A549 (cell line): ENCODE measurements at regions of chr20 and their contacts with region 1.

Region 1: DNA sequence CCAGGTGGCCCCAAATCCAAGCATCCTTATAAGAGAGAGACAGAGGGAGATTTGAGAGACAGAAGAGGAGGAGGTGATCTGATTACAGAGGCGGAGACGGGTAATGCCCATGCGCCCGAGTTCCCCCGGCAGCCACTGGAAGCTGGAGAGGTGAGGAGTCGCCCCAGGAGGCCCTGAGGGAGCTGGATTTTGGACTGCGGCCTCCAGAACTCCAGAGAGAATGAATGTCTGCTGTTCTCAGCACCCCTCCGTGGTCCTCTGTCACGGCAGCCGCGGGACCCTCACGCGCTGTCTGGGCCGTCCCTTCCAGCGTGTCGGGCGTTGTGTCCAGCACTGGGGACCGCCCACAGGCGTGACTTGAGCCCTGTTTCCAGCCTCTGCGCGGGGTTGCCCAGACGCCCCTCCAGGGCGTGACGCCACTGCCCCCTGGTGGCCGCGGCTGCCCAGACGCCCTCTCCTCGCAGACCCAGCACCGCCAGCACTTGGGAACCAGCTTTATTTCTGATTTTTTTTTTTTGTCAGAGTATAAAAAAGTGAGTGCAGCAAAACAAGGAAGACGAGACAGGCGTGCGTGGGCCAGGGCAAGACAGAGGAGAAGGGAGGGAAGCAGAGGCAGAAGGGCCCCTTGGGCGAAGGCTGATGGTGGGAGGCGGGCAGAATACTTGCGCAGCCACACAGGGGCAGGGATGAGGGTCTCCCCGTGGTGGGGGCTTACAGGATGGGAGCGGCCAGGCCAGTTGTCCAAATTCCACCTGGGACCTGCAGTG is 4.1 kb upstream of the ZNF512B start:
- DNase-seq: peak; percentile 86 to 87
- ATAC-seq: peak; percentile 67 to 92
- H3K4me3 ChIP-seq: peak overlapping the region; percentile 46
- H3K27ac ChIP-seq: peak overlapping the region; percentile 80 to 83
- H3K4me1 ChIP-seq: peaks cover 42% of the 10 kb centered on the region
- CTCF ChIP-seq: peak; percentile 97
- EP300 ChIP-seq: no peak
- POLR2A ChIP-seq: peak; percentile 56
- RAD21 ChIP-seq: peak; percentile 93 to 94

Region 2: GRCh38 chr20:63529861-63530788 is 443.7 kb before region 1 on chr20:
- CTCF ChIA-PET with region 1: interaction called, 12 read pairs
- POLR2A ChIA-PET with region 1: no interaction called
- DNase-seq: no peak
- ATAC-seq: peak; percentile 10; a peak in 4 of 6 replicates
- H3K4me3 ChIP-seq: no peak overlapping the region
- H3K27ac ChIP-seq: no peak overlapping the region
- H3K4me1 ChIP-seq: no peaks in the 10 kb centered on the region
- CTCF ChIP-seq: no peak
- EP300 ChIP-seq: no peak
- POLR2A ChIP-seq: no peak
- RAD21 ChIP-seq: no peak

Region 3: GRCh38 chr20:63889241-63890200 is 84.3 kb before region 1 on chr20:
- CTCF ChIA-PET with region 1: interaction called, 15 read pairs
- POLR2A ChIA-PET with region 1: no interaction called
- DNase-seq: no peak
- ATAC-seq: no peak
- H3K4me3 ChIP-seq: no peak overlapping the region
- H3K27ac ChIP-seq: no peak overlapping the region
- H3K4me1 ChIP-seq: no peaks in the 10 kb centered on the region
- CTCF ChIP-seq: no peak
- EP300 ChIP-seq: no peak
- POLR2A ChIP-seq: no peak
- RAD21 ChIP-seq: no peak

Region 4: DNA sequence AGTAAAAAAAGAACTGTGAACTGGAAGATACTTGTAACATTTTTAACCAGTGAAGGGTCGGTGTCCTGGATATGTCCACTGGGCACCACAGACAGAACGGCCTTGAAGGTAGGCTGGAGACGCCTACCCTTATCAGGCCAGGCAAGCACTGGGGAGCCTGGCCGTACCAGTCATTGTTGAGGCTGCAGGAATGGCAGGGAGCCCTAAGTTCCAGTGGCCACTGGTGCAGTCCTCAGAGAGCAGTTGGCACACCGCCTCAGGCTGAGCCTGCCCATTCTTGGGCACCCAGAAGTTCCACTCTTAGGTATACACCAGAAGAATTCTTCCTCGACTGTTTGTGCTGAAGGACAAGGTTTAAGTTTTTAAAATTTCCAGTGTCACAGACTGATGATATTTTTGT is 58.3 kb before region 1 on chr20:
- CTCF ChIA-PET with region 1: interaction called, 10 read pairs
- POLR2A ChIA-PET with region 1: no interaction called
- DNase-seq: no peak
- ATAC-seq: no peak
- H3K4me3 ChIP-seq: no peak overlapping the region
- H3K27ac ChIP-seq: no peak overlapping the region
- H3K4me1 ChIP-seq: no peaks in the 10 kb centered on the region
- CTCF ChIP-seq: no peak
- EP300 ChIP-seq: no peak
- POLR2A ChIP-seq: no peak
- RAD21 ChIP-seq: no peak

Region 5: GRCh38 chr20:63963348-63964301 is 10.2 kb before region 1 on chr20:
- CTCF ChIA-PET with region 1: interaction called, 44 read pairs
- POLR2A ChIA-PET with region 1: no interaction called
- DNase-seq: no peak
- ATAC-seq: no peak
- H3K4me3 ChIP-seq: no peak overlapping the region
- H3K27ac ChIP-seq: no peak overlapping the region
- H3K4me1 ChIP-seq: peaks cover 4% of the 10 kb centered on the region; the same call in 2 of the 3 replicates
- CTCF ChIP-seq: no peak
- EP300 ChIP-seq: no peak
- POLR2A ChIP-seq: no peak
- RAD21 ChIP-seq: no peak

Region 6: GRCh38 chr20:64015635-64016034 is 41.8 kb after region 1 on chr20:
- CTCF ChIA-PET with region 1: no interaction called
- POLR2A ChIA-PET with region 1: no interaction called
- DNase-seq: no peak
- ATAC-seq: no peak
- H3K4me3 ChIP-seq: no peak overlapping the region
- H3K27ac ChIP-seq: no peak overlapping the region
- H3K4me1 ChIP-seq: no peaks in the 10 kb centered on the region
- CTCF ChIP-seq: no peak
- EP300 ChIP-seq: no peak
- POLR2A ChIP-seq: no peak
- RAD21 ChIP-seq: no peak

Region 7: GRCh38 chr20:64161356-64162238 is 187.8 kb after region 1 on chr20:
- CTCF ChIA-PET with region 1: no interaction called
- POLR2A ChIA-PET with region 1: no interaction called
- DNase-seq: peak; percentile 19 to 28
- ATAC-seq: peak; percentile 40 to 67; a peak in 4 of 6 replicates
- H3K4me3 ChIP-seq: no peak overlapping the region
- H3K27ac ChIP-seq: no peak overlapping the region
- H3K4me1 ChIP-seq: no peaks in the 10 kb centered on the region
- CTCF ChIP-seq: no peak
- EP300 ChIP-seq: no peak
- POLR2A ChIP-seq: no peak
- RAD21 ChIP-seq: no peak